Esophagus muscularis mucosa (tissue), 4 donors: ENCODE measurements at regions of chr2 and their contacts with region 1.

Region 1: DNA sequence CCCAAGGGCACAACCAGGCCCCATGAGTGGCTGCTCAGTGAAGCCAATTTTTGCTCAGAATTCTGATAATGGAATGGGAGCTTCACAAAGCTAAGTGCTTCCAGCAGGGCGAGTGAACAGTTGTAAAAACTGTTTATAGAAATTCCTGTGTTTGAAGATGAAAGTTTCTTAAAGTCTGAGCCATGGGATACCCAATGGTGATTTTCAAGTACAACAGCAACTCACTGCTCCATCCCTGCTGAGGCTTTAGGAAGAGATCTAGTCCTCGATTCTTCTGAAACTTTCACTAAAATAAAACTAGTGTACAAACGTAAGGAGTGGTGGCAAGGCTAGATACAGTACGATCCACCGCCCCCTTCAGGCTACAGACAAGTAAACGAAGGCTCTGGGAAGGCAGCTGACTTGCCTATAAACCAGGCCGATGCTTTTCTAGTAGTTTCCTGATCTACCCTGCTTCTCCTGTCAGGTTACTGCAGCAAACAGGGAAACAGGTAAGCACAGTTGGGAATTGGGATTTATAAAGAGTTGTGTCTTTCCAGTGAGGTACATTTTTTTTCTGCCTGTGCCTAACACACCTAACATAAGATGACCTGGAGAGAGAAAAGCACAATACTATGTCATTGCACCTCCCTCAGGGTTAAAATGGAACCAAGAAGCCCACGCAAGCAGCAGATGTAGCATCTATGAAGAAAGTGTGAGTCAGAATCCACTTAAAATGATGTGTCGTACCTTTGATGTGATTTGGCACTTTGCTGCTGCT is 108.7 kb downstream of the UXS1 start:
- DNase-seq: peak; percentile 87
- H3K4me3 ChIP-seq: no peak overlapping the region
- H3K27ac ChIP-seq: no peak overlapping the region
- H3K4me1 ChIP-seq: peaks cover 0 to 9% (median 7%) of the 10 kb centered on the region in 4 donors
- H3K27me3 ChIP-seq: no peaks in the 10 kb centered on the region
- CTCF ChIP-seq: peak; percentile 31 to 52 (median 44)
- EP300 ChIP-seq: no peak
- POLR2A ChIP-seq: no peak

Region 2: GRCh38 chr2:105576440-105577252 is 508.7 kb before region 1 on chr2:
- intact Hi-C with region 1: loop called (anchors 5 kb)
- DNase-seq: no peak
- H3K4me3 ChIP-seq: no peak overlapping the region
- H3K27ac ChIP-seq: peak overlapping the region in 3 of 4 donors; percentile 10 to 31 (median 11)
- H3K4me1 ChIP-seq: peaks cover 9 to 28% (median 24%) of the 10 kb centered on the region in 4 donors
- H3K27me3 ChIP-seq: no peaks in the 10 kb centered on the region
- CTCF ChIP-seq: peak; percentile 60 to 71 (median 61)
- EP300 ChIP-seq: no peak
- POLR2A ChIP-seq: no peak

Region 3: DNA sequence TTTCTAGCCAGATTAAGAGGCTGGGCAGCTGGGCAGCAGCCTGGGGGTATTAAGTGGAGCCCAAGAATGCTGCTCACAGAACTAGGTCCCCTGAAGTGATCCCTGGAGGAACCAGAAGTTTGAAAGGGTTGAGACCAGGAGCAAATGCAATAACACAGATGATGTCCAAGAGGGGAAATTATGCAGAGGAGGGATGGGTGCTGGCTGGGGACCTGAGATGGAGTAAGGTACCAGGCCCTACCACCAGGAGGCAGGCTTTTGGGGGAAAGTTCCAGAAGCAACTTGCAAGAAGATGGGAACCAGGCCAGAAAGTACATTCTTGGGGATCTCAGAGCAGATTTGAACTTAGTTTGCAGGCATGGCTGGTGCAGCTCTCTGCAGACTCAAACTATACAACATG is 165.5 kb before region 1 on chr2:
- intact Hi-C with region 1: loop called (anchors 10 kb)
- DNase-seq: no peak
- H3K4me3 ChIP-seq: no peak overlapping the region
- H3K27ac ChIP-seq: no peak overlapping the region
- H3K4me1 ChIP-seq: peaks cover 0 to 6% (median 0%) of the 10 kb centered on the region in 4 donors
- H3K27me3 ChIP-seq: no peaks in the 10 kb centered on the region
- CTCF ChIP-seq: peak in 1 of 3 experiments; percentile 45
- EP300 ChIP-seq: no peak
- POLR2A ChIP-seq: no peak

Region 4: GRCh38 chr2:106011380-106011779 is 74.0 kb before region 1 on chr2:
- intact Hi-C with region 1: no loop called
- DNase-seq: no peak
- H3K4me3 ChIP-seq: no peak overlapping the region
- H3K27ac ChIP-seq: no peak overlapping the region
- H3K4me1 ChIP-seq: peaks cover 0 to 6% (median 0%) of the 10 kb centered on the region in 4 donors
- H3K27me3 ChIP-seq: no peaks in the 10 kb centered on the region
- CTCF ChIP-seq: no peak
- EP300 ChIP-seq: no peak
- POLR2A ChIP-seq: no peak

Region 5: GRCh38 chr2:106342831-106343251 is 257.5 kb after region 1 on chr2:
- intact Hi-C with region 1: no loop called
- DNase-seq: no peak
- H3K4me3 ChIP-seq: no peak overlapping the region
- H3K27ac ChIP-seq: no peak overlapping the region
- H3K4me1 ChIP-seq: no peaks in the 10 kb centered on the region
- H3K27me3 ChIP-seq: no peaks in the 10 kb centered on the region
- CTCF ChIP-seq: no peak
- EP300 ChIP-seq: no peak
- POLR2A ChIP-seq: no peak